Activated CD8-positive, alpha-beta T cell treated with anti-CD3 and anti-CD28 coated beads for 36 hours (primary cell): ENCODE measurements at regions of chr5 and their contacts with region 1.

Region 1: DNA sequence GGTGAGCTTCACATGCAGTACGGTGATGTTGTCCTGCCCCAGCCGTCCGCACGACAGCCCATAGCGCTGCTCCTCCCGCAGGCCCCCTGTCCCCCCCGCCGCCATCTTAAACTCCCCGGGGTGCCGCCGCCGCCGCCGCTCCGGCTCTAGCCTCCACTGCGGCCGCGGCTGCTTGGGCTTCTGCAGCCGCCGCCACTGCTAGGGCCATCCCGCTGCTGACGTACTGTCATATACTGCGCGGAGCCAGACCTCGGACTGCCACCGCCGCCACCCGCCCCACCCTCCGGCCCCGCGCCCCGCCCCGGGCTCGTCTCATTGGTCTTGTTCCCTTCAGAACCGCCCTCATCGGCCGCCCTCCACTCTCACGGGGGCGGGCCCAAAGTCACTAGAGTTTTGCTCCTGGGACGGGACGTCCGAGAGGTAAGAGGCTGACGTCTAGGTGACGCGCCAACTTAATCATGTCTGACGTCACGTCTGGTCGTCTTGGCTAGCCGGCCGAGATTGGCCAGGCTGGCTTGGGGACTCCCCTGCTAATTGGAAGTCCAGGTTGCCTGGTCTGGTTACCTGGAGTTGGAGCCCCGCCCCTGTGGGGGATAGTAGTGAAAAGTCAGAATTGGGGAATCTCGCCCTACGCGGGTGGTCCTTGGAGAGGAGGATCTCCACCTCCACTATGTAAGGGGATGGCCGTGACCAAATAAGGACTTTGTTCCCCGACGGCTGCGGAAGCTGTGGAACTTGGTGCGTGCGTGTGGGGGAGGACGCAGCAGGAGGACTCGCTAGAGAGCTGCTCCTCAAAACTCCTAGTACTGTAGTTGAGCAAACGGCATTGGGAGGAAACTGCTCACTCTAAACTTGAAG is at the start of gene ELL2:
- DNase-seq: peak; percentile 99
- ATAC-seq: peak; percentile 91
- H3K4me3 Mint-ChIP-seq: peak within 1 kb of the TSS; percentile 95
- H3K27ac Mint-ChIP-seq: peak within 1 kb of the TSS; percentile 98
- H3K4me1 Mint-ChIP-seq: peaks cover 47% of the 10 kb centered on the region
- H3K27me3 Mint-ChIP-seq: no peaks in the 10 kb centered on the region
- CTCF ChIP-seq: no peak
- total RNA-seq, gene ELL2: 39.7 to 46.3 TPM

Region 2: DNA sequence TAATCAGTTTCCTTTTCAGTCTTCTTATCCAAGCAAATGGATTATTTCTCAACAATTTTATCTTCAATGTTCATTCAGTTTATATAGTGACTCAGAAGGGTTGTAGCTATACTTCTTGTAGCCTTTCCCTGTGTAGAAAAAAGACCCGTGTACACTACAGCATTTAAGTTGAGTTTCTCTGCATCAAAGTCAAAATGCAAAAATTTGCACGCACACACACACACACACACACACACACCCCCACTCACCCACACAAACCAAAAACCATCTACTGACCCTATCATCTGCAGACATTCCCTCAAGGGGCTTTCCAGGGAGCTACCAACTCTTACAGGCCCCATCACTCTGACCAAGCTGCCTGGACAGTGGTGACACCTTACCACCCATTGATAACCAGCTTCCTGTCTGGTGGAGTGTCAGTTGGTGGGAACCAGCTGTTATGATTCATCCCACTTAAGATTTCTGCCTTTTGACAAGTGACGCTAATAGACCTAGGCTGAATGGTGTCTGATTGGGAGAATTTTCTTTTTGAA is 12.0 kb after region 1 on chr5:
- CTCF ChIA-PET with region 1: interaction called, 4 read pairs
- POLR2A ChIA-PET with region 1: interaction called, 14 read pairs
- intact Hi-C with region 1: no loop called
- DNase-seq: peak; percentile 45
- ATAC-seq: peak; percentile 81
- H3K4me3 Mint-ChIP-seq: no peak overlapping the region
- H3K27ac Mint-ChIP-seq: peak overlapping the region; percentile 27
- H3K4me1 Mint-ChIP-seq: peaks cover 7% of the 10 kb centered on the region
- H3K27me3 Mint-ChIP-seq: peaks cover 9% of the 10 kb centered on the region
- CTCF ChIP-seq: no peak

Region 3: GRCh38 chr5:95984287-95984938 is 22.6 kb after region 1 on chr5:
- CTCF ChIA-PET with region 1: no interaction called
- POLR2A ChIA-PET with region 1: no interaction called
- intact Hi-C with region 1: no loop called
- DNase-seq: no peak
- ATAC-seq: no peak
- H3K4me3 Mint-ChIP-seq: no peak overlapping the region
- H3K27ac Mint-ChIP-seq: no peak overlapping the region
- H3K4me1 Mint-ChIP-seq: no peaks in the 10 kb centered on the region
- H3K27me3 Mint-ChIP-seq: no peaks in the 10 kb centered on the region
- CTCF ChIP-seq: no peak

Region 4: GRCh38 chr5:96079075-96079474 is 117.2 kb after region 1 on chr5:
- CTCF ChIA-PET with region 1: no interaction called
- POLR2A ChIA-PET with region 1: interaction called, 4 read pairs
- intact Hi-C with region 1: loop called (anchors 5 kb)
- DNase-seq: peak; percentile 63
- ATAC-seq: peak; percentile 91
- H3K4me3 Mint-ChIP-seq: no peak overlapping the region
- H3K27ac Mint-ChIP-seq: peak overlapping the region; percentile 85
- H3K4me1 Mint-ChIP-seq: peaks cover 48% of the 10 kb centered on the region
- H3K27me3 Mint-ChIP-seq: peaks cover 3% of the 10 kb centered on the region
- CTCF ChIP-seq: no peak